Head of caudate nucleus (tissue), 42 donors: ENCODE measurements at regions of chr11 and their contacts with region 1.

Region 1: GRCh38 chr11:62726915-62727763 is at the start of gene HNRNPUL2:
- DNase-seq: peak; percentile 93 to 99 (median 98)

Region 2: DNA sequence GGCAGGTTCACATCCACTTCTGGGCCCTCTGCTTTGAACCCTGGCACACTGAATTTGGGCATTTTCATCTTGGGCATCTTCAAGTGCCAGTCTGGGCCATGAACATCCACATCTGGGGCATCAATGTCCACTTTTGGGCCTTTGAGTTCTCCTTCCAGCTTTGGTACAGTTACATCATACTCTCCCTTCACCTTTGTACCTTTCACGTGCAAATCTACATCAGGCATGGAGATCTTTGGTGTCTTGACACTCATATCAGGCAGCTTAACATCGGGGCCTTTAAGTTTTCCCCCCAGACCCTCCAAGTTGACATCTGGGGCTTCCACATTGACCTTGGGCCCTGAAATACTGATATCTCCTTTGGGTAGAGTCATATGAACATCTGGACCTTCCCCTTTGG is 195.0 kb before region 1 on chr11:
- intact Hi-C with region 1: no loop called
- DNase-seq: no peak

Region 3: DNA sequence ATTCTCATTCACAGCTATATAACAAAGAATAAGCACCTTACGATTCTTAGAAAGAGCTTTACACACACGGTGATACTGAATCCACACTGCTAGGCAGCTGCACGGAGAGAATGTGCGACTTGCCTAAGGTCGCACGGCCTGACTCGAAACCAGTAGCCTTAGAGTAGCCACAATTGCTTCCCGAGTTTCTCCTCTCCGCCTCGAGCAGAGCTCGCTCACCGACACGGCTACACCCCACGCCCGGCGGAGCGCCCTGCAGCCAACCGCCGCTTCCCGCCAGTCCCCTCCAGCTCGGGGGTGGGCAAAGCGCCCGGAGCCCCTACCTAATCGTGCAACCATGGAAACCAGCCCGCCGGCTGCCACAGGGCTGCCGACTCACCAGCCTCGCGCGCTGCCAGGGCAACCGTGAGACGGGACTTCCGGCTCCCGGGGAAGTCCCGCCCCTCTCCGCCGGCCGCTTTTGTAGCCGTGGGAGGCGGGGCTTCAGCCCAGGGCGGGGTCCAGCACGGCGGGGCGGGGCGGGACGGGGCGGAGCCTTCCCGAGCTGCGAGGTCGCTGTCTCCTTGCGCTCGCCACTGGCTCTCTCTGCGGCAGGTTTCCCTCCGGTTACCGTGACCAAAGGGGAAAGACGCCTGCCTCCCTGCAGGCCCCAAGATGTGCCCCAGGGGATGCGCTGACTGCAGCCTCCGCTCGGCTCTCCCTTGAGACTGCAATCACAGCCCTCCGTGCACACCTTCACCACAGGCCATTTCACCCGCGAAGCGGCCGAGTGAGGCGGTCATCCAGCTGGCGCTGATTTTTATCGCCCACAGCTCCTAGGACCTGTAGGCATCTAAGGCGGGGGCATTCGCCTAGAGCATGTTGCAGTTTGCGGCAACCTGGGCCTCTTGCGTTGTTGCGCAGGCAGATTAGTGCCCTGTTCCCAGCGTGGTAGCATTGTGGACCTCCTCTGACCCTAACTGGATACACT is 21.0 kb before region 1 on chr11:
- intact Hi-C with region 1: loop called (anchors 2 kb)
- DNase-seq: peak; percentile 91 to 99 (median 97)

Region 4: GRCh38 chr11:62771144-62772021 is 44.2 kb after region 1 on chr11 and contains the start of gene TAF6L:
- intact Hi-C with region 1: loop called (anchors 5 kb)
- DNase-seq: peak; percentile 96 to 100 (median 98)

Region 5: GRCh38 chr11:62831520-62832335 is 104.6 kb after region 1 on chr11 and contains the start of gene STX5:
- intact Hi-C with region 1: loop called (anchors 10 kb)
- DNase-seq: peak; percentile 99 to 100 (median 100)